Posterior cingulate gyrus (tissue), 11 donors: ENCODE measurements at regions of chr1 and their contacts with region 1.

Region 1: DNA sequence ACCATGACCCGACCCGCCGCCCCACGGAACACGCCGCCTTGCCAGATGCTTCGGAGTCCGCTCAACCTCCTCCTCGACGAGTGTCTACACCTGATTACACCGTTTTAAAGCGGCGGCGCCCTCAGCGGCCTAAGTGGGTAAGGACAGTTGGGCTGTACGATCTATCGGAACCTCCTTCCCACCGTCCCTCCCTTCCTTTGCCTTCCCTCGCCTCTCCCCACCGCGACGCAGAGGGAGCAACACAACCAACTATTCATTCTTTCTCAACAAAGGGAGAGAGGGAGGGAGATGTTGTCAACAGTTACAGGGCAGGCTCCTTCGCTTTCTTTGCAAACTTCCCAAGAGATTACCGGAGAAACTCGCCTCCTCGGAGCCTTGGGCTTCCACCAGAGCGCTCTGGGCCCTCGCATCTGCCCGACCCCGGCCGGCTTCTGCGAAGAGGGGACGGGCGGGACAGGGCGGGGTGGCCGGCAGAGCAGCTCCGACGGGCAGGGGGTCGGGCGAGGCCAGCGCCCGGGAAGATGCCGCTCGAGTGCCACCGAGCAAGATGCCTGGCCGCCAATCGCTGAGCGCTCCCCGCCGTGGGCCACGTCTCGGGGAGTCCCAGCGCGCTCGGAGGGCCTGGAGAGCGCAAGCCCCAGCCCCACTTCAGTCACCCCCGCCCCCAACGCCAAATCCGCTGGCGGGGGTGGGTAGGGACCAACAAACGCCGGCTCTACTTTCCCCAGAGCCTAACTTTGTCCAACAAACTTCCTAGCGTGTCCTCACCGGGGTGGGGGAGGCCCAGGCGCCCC is 683 bp downstream of the BCAR3 start:
- DNase-seq: peak; percentile 37 to 93 (median 66)

Region 2: GRCh38 chr1:93447516-93448291 is 233.2 kb before region 1 on chr1 and contains the start of gene FNBP1L:
- intact Hi-C with region 1: loop called (anchors 5 kb)
- DNase-seq: peak; percentile 48 to 94 (median 60)

Region 3: DNA sequence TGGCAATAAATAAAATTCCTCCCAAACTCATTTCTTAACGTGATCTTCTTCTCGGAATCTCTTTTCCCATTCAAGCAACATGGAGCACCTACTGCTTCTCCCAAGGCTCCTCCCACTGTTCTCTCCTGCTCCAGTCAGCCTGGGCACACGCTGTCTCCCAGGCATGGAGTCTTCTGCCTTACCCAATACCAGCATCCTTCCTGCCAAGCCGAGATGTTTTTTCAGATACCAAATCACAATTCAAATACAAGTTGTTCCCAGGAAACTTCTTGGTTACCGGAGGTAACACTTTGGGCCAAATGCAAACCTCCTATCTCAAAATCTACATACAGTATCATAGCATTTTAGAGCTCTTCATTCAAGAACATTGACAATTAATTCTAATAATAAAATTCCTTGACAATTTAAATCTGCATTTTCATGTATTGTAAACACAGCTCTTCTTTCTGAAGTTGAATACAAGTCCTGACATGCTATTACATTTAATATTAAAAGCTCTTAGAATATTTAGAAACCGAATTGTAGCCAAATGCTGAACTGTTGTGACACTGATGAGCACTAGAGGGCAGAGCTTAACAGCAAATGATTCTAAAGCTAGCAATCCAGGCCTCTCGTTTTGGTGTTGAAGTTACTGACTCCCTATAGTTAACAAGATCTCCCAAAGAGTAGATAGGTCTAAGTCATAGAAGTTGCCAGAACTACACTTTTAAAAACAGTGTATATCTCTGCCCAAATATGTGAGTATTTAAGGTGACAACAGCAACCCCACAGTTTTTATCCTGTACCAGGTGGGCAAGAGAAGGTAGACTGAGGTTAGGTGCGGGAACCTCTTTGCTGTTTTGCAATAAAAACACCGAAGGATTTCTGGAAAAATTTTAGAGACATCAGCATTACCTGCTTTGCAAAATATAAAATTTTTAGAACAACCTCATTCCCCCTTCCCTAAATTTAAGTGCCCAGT is 51.6 kb before region 1 on chr1:
- intact Hi-C with region 1: loop called (anchors 10 kb)
- DNase-seq: peak in 2 of 10 donors; percentile 38 to 46

Region 4: DNA sequence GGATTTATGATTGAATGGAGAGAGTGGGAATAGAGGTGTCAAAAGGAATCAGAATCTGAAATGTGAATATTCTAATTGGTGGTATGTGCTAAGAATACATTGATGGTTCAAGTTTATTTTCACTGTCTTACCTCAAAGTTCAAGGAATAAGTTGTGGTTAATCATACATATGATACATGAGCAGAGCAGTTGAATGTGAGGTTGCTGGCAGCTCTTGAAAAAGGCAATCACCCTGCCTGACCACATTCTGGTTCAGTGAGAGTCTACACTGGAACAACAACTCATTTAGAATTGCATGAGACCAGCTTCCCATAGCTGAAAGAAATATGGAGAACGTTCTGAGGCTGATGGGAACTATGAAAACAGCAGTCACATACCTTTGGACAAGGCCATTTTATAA is 624.8 kb after region 1 on chr1:
- intact Hi-C with region 1: no loop called
- DNase-seq: no peak

Region 5: DNA sequence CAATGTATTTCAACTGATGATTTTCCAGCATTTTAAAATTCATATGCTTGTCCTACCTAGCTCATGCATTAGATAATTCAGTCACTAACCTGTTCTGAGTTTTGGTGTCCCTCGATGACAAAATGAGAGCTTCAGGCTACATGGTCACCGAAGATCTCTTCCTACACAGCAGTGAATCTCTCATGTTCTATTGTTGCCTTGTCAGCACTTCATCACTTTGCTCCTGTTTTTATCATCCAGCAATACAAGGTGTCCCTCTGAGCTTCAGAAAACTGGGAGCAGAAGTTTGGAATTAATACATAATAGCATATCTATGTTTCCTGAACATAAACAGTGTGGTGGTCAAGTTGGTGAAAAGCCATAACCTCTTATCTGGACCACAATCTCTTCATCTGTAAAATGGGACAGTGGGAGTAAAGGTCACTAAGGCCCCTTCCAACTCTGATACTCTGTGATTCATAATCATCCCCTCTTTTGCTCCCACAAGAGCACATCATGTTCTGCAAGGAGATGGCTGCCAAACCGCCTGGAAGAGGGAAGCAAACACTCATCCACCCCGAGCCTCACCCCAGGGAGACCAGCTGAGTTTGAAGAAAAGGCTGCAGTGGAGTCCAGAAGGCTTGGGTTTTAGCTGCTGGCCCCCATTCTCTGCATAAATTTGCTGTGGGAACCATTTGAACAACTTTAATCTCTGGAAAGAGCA is 998.5 kb after region 1 on chr1:
- intact Hi-C with region 1: no loop called
- DNase-seq: no peak